ENCODE measurements at regions of chr3 and their contacts with region 1.

Region 1: GRCh38 chr3:11379233-11379823 is 107.1 kb downstream of the ATG7 start:
- DNase-seq: no peak
- H3K4me3 ChIP-seq: no peak overlapping the region
- H3K27ac ChIP-seq: no peak overlapping the region
- H3K4me1 ChIP-seq: peaks cover 0 to 8% (median 0%) of the 10 kb centered on the region in 4 experiments; a peak in 2 of 7 replicates
- H3K27me3 ChIP-seq: no peaks in the 10 kb centered on the region
- CTCF ChIP-seq: peak in 2 of 3 experiments; percentile 34 to 48; a peak in 2 of 4 replicates
- EP300 ChIP-seq: no peak
- POLR2A ChIP-seq: no peak
- RAD21 ChIP-seq: peak; percentile 80 to 81

Region 2: DNA sequence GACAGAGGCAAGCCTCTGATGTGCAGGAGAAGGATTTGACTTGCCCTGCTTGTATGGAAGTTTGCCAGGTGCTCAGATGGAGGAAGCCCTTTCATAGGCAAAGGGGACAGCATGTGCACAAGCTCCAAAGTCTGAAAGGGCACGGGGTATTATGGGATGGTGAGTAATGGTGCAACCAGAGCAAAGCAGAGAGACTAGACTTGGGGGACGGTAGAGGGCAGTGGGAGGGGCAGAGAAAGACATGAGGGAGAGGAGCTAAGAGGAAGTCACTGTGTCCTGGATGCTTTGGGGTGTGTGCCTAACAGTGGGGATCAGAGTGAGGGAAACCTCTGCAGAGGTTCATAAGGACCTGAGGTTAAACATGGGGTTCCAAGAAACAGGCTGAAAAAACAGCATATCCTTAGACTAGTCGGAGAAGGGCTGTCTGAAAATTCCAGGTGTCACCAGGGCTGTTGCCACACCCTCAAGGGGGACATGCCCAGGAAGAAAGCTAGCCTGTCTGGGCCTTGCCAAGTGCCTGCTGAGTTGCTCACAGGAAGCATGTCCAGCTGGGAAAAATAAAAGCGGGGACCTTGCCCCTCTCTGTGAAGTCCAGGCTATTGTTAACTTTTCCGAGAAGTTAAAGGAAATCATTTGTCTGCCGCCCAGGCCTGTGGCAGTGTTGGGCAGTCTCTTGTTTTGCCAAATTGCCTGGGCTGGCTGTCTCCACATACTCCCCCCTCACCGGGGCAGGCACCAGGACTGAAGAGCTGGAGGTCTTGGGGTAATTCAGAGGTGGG is 177.9 kb before region 1 on chr3:
- CTCF ChIA-PET with region 1: no interaction called
- POLR2A ChIA-PET with region 1: no interaction called
- DNase-seq: no peak
- H3K4me3 ChIP-seq: no peak overlapping the region
- H3K27ac ChIP-seq: no peak overlapping the region
- H3K4me1 ChIP-seq: peaks cover 0 to 2% (median 0%) of the 10 kb centered on the region in 4 experiments; a peak in 4 of 7 replicates
- H3K27me3 ChIP-seq: no peaks in the 10 kb centered on the region
- CTCF ChIP-seq: no peak
- EP300 ChIP-seq: no peak
- POLR2A ChIP-seq: no peak
- RAD21 ChIP-seq: no peak

Region 3: GRCh38 chr3:11532931-11533391 is 153.6 kb after region 1 on chr3:
- CTCF ChIA-PET with region 1: interaction called, 58 read pairs
- POLR2A ChIA-PET with region 1: no interaction called
- DNase-seq: no peak
- H3K4me3 ChIP-seq: no peak overlapping the region
- H3K27ac ChIP-seq: no peak overlapping the region
- H3K4me1 ChIP-seq: peaks cover 0 to 3% (median 0%) of the 10 kb centered on the region in 4 experiments; a peak in 1 of 7 replicates
- H3K27me3 ChIP-seq: no peaks in the 10 kb centered on the region
- CTCF ChIP-seq: no peak
- EP300 ChIP-seq: no peak
- POLR2A ChIP-seq: no peak
- RAD21 ChIP-seq: no peak

Region 4: DNA sequence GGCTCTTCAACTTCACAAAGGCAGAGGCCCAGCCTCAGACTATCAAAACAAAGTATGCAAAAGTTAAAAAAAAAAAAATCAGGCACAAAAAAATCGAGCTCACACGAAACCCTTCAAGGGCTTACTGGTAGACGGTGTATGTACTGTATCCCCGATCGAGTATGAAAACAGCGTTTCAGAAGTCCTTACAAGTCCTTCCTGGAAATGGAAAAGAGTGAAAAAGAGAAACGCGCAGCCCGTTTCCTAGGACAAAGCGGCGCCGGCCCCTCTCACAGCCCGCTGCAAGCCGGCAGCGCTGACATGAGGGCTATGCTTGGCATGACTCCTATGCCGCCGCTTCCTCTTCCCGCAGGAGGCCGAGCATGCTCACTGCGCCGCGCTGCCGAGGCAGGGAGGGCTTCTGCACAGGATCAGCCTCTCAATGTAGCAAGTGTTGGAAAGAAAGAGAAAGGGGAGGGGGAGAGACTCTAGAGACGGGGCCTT is 264.3 kb after region 1 on chr3 and contains the start of gene VGLL4:
- CTCF ChIA-PET with region 1: interaction called, 21 read pairs
- POLR2A ChIA-PET with region 1: interaction called, 4 read pairs
- DNase-seq: peak; percentile 81 to 82
- H3K4me3 ChIP-seq: peak within 1 kb of the TSS; percentile 80 to 83 (median 82)
- H3K27ac ChIP-seq: peak within 1 kb of the TSS; percentile 75
- H3K4me1 ChIP-seq: peaks cover 1 to 12% (median 5%) of the 10 kb centered on the region in 4 experiments; a peak in 6 of 7 replicates
- H3K27me3 ChIP-seq: no peaks in the 10 kb centered on the region
- CTCF ChIP-seq: peak in 2 of 3 experiments; percentile 1 to 22; a peak in 2 of 4 replicates
- EP300 ChIP-seq: no peak
- POLR2A ChIP-seq: peak; percentile 65 to 66
- RAD21 ChIP-seq: peak; percentile 26 to 45
- total RNA-seq, gene VGLL4: 41.9 and 45.1 TPM in 2 replicates

Region 5: DNA sequence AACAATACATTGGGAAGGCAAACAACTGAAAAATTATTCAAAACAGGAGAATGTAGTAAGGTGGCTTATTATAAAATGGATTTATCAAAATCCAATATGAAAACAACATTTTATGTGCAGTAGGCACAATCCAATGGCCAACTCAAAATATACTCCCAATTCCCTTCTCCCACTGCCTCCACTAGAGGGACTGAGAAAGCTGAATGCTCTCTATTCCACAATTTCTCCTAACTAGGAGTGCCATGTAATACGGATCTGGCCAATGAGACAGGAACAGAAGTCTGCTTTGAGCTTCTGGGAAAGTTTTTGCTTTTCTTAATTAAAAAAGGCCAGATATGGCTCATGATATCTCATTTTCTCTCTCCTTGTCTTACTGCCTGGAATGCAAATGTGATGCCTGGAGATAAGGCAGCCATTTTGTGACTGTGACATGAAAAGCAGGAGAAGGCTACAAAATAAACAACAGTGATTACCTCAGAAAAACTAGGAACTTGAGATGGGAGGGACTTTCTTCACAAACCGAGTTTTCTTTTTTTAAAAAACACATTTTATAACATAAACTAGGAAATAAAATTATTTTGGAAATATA is 283.2 kb after region 1 on chr3:
- CTCF ChIA-PET with region 1: interaction called, 20 read pairs
- POLR2A ChIA-PET with region 1: no interaction called
- DNase-seq: no peak
- H3K4me3 ChIP-seq: no peak overlapping the region
- H3K27ac ChIP-seq: no peak overlapping the region
- H3K4me1 ChIP-seq: peaks cover 0 to 4% (median 1%) of the 10 kb centered on the region in 4 experiments; a peak in 3 of 7 replicates
- H3K27me3 ChIP-seq: no peaks in the 10 kb centered on the region
- CTCF ChIP-seq: peak in 2 of 3 experiments; percentile 28 to 63; a peak in 2 of 4 replicates
- EP300 ChIP-seq: no peak
- POLR2A ChIP-seq: no peak
- RAD21 ChIP-seq: peak; percentile 41 to 55; a peak in 3 of 4 replicates

Region 6: GRCh38 chr3:11803977-11804892 is 424.9 kb after region 1 on chr3:
- CTCF ChIA-PET with region 1: interaction called, 14 read pairs
- POLR2A ChIA-PET with region 1: no interaction called
- DNase-seq: no peak
- H3K4me3 ChIP-seq: no peak overlapping the region
- H3K27ac ChIP-seq: no peak overlapping the region
- H3K4me1 ChIP-seq: no peaks in the 10 kb centered on the region
- H3K27me3 ChIP-seq: no peaks in the 10 kb centered on the region
- CTCF ChIP-seq: peak; percentile 57 to 88 (median 76)
- EP300 ChIP-seq: no peak
- POLR2A ChIP-seq: no peak
- RAD21 ChIP-seq: peak; percentile 74 to 80